Caco-2 (cell line): ENCODE measurements at regions of chr16 and their contacts with region 1.

Region 1: DNA sequence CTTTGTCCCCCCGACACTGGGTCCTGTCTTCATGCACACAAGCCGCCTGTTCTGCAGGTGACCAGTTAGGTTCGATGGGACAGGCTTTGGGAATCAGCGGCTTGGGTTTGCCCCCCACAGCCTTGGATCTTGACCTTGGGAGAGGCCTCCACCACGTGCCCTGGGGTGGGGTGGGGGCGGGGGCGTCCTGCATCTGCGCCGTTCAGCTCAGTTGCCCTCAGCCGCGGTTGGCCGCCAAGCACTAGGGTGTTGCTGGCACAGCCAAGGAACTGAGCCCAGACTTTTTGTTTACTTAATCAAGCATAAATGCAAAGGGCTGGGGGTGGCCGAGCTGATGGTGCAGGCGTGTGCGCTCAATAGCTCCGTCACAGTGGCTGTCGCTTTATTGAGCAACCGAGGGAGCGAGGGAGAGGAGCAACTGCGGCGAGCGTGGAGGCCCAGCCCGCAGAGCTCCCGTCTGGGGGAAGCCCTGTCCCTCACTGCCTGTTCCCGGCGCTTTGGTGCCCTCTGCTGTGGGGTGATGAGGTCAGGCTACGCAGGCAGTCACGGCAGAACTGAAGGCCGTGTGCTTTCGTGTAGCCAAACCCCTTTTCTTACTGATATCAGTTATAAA is 33.9 kb downstream of the JPH3 start:
- DNase-seq: peak; percentile 87 to 90
- H3K4me3 ChIP-seq: peak overlapping the region; percentile 28
- H3K4me3 Mint-ChIP-seq: peak overlapping the region; percentile 66
- H3K27ac Mint-ChIP-seq: no peak overlapping the region
- H3K4me1 ChIP-seq: peaks cover 7% of the 10 kb centered on the region; the same call in 1 of the 2 replicates
- H3K4me1 Mint-ChIP-seq: peaks cover 9% of the 10 kb centered on the region
- H3K27me3 ChIP-seq: no peaks in the 10 kb centered on the region
- H3K27me3 Mint-ChIP-seq: peaks cover 27% of the 10 kb centered on the region
- CTCF ChIP-seq: peak; percentile 91 to 93

Region 2: DNA sequence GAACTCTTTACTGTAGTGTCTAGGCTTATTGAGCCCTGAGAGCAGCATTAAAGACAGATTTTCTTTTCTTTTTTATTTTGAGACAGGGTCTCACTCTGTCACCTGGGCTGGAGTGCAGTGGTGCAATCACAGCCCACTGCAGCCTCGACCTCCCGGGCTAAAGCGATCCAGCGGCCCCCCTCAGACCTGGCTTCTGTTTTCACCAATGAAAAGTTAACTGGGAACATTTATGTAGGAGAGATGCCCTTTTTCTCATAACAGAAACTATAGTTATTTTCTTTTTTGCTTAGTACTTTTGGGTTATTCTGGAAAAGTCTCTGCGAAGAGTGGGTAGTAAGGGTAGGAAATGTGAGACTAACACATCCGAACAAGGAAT is 242.5 kb before region 1 on chr16:
- CTCF ChIA-PET with region 1: interaction called, 14 read pairs
- POLR2A ChIA-PET with region 1: no interaction called
- intact Hi-C with region 1: loop called (anchors 5 kb)
- DNase-seq: peak in 1 of 2 experiments; percentile 3
- H3K4me3 ChIP-seq: peak overlapping the region; percentile 81
- H3K4me3 Mint-ChIP-seq: peak overlapping the region; percentile 86
- H3K27ac Mint-ChIP-seq: peak overlapping the region; percentile 85
- H3K4me1 ChIP-seq: peaks cover 16% of the 10 kb centered on the region
- H3K4me1 Mint-ChIP-seq: peaks cover 26% of the 10 kb centered on the region
- H3K27me3 ChIP-seq: no peaks in the 10 kb centered on the region
- H3K27me3 Mint-ChIP-seq: no peaks in the 10 kb centered on the region
- CTCF ChIP-seq: no peak

Region 3: GRCh38 chr16:87461466-87461991 is 174.6 kb before region 1 on chr16:
- CTCF ChIA-PET with region 1: interaction called, 21 read pairs
- POLR2A ChIA-PET with region 1: no interaction called
- intact Hi-C with region 1: loop called (anchors 2 kb)
- DNase-seq: peak; percentile 96 to 98
- H3K4me3 ChIP-seq: peak overlapping the region; percentile 23; the same call in 1 of the 2 replicates
- H3K4me3 Mint-ChIP-seq: peak overlapping the region; percentile 59
- H3K27ac Mint-ChIP-seq: no peak overlapping the region
- H3K4me1 ChIP-seq: peaks cover 14% of the 10 kb centered on the region; the same call in 1 of the 2 replicates
- H3K4me1 Mint-ChIP-seq: peaks cover 7% of the 10 kb centered on the region
- H3K27me3 ChIP-seq: no peaks in the 10 kb centered on the region
- H3K27me3 Mint-ChIP-seq: no peaks in the 10 kb centered on the region
- CTCF ChIP-seq: peak; percentile 77 to 85

Region 4: GRCh38 chr16:87581833-87582203 is 54.4 kb before region 1 on chr16:
- CTCF ChIA-PET with region 1: interaction called, 187 read pairs
- POLR2A ChIA-PET with region 1: interaction called, 3 read pairs
- intact Hi-C with region 1: no loop called
- DNase-seq: peak; percentile 59 to 72
- H3K4me3 ChIP-seq: no peak overlapping the region
- H3K4me3 Mint-ChIP-seq: no peak overlapping the region
- H3K27ac Mint-ChIP-seq: no peak overlapping the region
- H3K4me1 ChIP-seq: peaks cover 15% of the 10 kb centered on the region
- H3K4me1 Mint-ChIP-seq: no peaks in the 10 kb centered on the region
- H3K27me3 ChIP-seq: no peaks in the 10 kb centered on the region
- H3K27me3 Mint-ChIP-seq: peaks cover 4% of the 10 kb centered on the region
- CTCF ChIP-seq: no peak

Region 5: GRCh38 chr16:87648236-87648635 is 12.1 kb after region 1 on chr16:
- CTCF ChIA-PET with region 1: interaction called, 23 read pairs
- POLR2A ChIA-PET with region 1: no interaction called
- intact Hi-C with region 1: no loop called
- DNase-seq: no peak
- H3K4me3 ChIP-seq: no peak overlapping the region
- H3K4me3 Mint-ChIP-seq: no peak overlapping the region
- H3K27ac Mint-ChIP-seq: no peak overlapping the region
- H3K4me1 ChIP-seq: no peaks in the 10 kb centered on the region
- H3K4me1 Mint-ChIP-seq: peaks cover 6% of the 10 kb centered on the region
- H3K27me3 ChIP-seq: no peaks in the 10 kb centered on the region
- H3K27me3 Mint-ChIP-seq: peaks cover 12% of the 10 kb centered on the region
- CTCF ChIP-seq: no peak